ENCODE measurements at regions of chr17 and their contacts with region 1.

Region 1: DNA sequence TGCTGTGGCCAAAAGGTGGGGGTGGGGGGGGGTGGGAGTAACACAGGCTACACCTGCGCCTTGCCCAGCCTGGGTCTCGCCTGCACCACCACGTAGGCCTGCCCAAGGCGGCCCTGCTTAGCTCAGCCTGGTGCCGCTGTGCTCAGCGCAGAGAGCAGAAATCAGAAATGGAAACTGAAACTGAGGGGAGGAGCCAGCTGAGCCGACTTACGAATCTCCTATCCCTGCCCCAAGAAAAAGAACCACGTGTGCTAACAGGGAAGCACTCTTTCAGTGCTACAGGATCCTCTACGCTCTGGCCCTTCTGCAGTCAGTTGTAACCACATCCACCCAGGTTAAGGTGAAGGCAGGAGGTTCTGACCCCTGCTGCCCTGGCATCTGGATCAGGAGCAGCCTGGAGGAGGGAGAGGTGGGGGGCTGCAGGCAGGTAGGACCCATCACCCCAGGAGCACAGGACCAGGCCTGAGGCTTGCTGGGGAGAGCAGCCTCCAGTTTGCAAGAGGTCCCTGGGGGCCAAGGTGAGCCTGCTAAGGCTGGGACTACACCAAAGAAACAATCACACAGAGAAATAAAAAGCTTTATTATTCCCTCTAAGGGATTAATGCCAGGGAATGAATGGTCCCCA is at the start of gene DHX58:
- DNase-seq: peak; percentile 47 to 86 (median 81)
- ATAC-seq: peak; percentile 85
- H3K4me3 ChIP-seq: peak within 1 kb of the TSS; percentile 83
- H3K4me3 Mint-ChIP-seq: peak within 1 kb of the TSS; percentile 86 to 96 (median 94)
- H3K27ac ChIP-seq: peak within 1 kb of the TSS; percentile 83
- H3K27ac Mint-ChIP-seq: peak within 1 kb of the TSS; percentile 94 to 100 (median 97)
- H3K4me1 ChIP-seq: peaks cover 12 to 34% of the 10 kb centered on the region in 2 donors
- H3K4me1 Mint-ChIP-seq: peaks cover 22 to 60% (median 48%) of the 10 kb centered on the region in 7 donors
- H3K27me3 ChIP-seq: no peaks in the 10 kb centered on the region
- H3K27me3 Mint-ChIP-seq: no peaks in the 10 kb centered on the region
- total RNA-seq, gene DHX58: 36.0 to 80.5 (median 53.5) TPM

Region 2: DNA sequence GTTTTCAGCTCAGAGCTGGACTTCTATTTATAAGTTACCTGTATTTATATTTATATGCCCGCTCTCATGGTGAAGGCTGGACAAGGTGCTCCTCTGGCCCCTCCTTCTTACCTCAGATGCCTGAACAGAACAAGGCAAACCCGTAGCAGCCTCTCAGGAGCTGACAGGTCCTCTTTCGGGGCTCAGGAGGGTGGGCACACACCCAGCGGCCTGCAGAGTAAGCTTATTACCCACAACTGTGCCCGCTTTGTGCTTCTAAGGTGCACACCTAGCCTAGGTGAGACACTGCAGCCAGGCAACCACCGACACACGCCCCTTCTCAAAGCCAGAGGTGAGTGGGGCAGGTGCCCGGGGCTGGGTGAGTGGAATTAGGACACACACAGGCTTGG is 87.5 kb before region 1 on chr17:
- CTCF ChIA-PET with region 1: interaction called, 22 read pairs
- POLR2A ChIA-PET with region 1: interaction called, 25 read pairs
- intact Hi-C with region 1: loop called (anchors 1 kb)
- DNase-seq: no peak
- ATAC-seq: no peak
- H3K4me3 ChIP-seq: no peak overlapping the region
- H3K4me3 Mint-ChIP-seq: no peak overlapping the region
- H3K27ac ChIP-seq: no peak overlapping the region
- H3K27ac Mint-ChIP-seq: peak overlapping the region in 3 of 9 donors; percentile 18 to 75 (median 37)
- H3K4me1 ChIP-seq: peaks cover 9 to 11% of the 10 kb centered on the region in 2 donors
- H3K4me1 Mint-ChIP-seq: peaks cover 6 to 26% (median 24%) of the 10 kb centered on the region in 7 donors
- H3K27me3 ChIP-seq: no peaks in the 10 kb centered on the region
- H3K27me3 Mint-ChIP-seq: peaks cover 0 to 8% (median 0%) of the 10 kb centered on the region in 5 donors

Region 3: DNA sequence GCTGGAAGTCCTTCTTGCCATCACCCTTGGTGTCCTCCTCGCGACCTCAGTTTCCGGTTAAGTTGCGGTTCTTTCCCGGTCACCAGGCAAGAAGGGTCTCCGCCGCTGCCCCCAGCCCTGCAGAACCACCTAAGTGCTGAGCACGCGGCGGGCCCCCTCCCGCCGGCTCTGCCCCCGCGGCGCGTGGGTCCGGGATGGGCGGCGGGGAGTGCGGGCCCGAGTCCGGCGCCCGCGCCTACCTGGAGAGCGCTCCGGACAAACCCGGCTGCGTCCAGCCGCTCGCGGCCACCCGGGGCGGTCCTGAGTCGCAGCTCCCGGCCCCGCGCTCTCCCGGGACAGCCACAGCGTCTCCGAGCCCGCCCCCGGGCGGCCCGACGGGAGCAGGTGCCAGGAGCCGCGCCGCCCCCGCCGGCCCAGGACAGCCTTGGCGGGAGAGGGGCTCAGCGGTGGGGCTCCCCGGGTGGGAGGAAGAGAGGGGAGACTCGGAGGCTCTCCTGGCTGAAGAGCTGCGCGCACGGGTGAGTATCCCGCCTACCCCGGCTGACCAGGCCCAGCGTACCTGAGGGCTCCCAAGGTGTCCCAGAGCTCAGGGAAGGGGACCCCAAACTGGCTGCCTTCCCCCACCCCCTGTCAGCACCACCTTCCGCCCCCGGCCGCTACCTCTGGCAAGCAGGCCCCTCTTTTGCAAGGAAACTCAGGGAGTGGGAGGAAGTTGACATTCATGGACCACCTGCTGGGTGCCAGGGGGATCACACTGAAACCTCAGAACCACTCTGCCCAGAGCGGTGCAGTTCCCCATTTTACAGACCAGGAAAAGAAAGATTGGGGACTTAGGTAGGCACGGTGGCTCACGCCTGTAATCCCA is 40.1 kb before region 1 on chr17:
- CTCF ChIA-PET with region 1: interaction called, 19 read pairs
- POLR2A ChIA-PET with region 1: interaction called, 10 read pairs
- intact Hi-C with region 1: loop called (anchors 1 kb)
- DNase-seq: peak in 1 of 9 donors; percentile 3
- ATAC-seq: peak; percentile 24
- H3K4me3 ChIP-seq: peak overlapping the region; percentile 30
- H3K4me3 Mint-ChIP-seq: peak overlapping the region in 9 of 10 donors; percentile 36 to 78 (median 56)
- H3K27ac ChIP-seq: no peak overlapping the region
- H3K27ac Mint-ChIP-seq: no peak overlapping the region
- H3K4me1 ChIP-seq: peaks cover 7 to 9% of the 10 kb centered on the region in 2 donors
- H3K4me1 Mint-ChIP-seq: peaks cover 0 to 7% (median 5%) of the 10 kb centered on the region in 7 donors
- H3K27me3 ChIP-seq: peaks cover 0 to 7% of the 10 kb centered on the region in 2 donors
- H3K27me3 Mint-ChIP-seq: peaks cover 22 to 37% (median 31%) of the 10 kb centered on the region in 5 donors

Region 4: GRCh38 chr17:42101513-42102319 is 10.9 kb before region 1 on chr17:
- CTCF ChIA-PET with region 1: interaction called, 8 read pairs
- POLR2A ChIA-PET with region 1: interaction called, 11 read pairs
- intact Hi-C with region 1: no loop called
- DNase-seq: peak in 7 of 9 donors; percentile 34 to 77 (median 44)
- ATAC-seq: peak; percentile 72
- H3K4me3 ChIP-seq: no peak overlapping the region
- H3K4me3 Mint-ChIP-seq: no peak overlapping the region
- H3K27ac ChIP-seq: no peak overlapping the region
- H3K27ac Mint-ChIP-seq: no peak overlapping the region
- H3K4me1 ChIP-seq: peaks cover 6 to 8% of the 10 kb centered on the region in 2 donors
- H3K4me1 Mint-ChIP-seq: peaks cover 0 to 12% (median 10%) of the 10 kb centered on the region in 7 donors
- H3K27me3 ChIP-seq: no peaks in the 10 kb centered on the region
- H3K27me3 Mint-ChIP-seq: peaks cover 0 to 15% (median 9%) of the 10 kb centered on the region in 5 donors

Region 5: DNA sequence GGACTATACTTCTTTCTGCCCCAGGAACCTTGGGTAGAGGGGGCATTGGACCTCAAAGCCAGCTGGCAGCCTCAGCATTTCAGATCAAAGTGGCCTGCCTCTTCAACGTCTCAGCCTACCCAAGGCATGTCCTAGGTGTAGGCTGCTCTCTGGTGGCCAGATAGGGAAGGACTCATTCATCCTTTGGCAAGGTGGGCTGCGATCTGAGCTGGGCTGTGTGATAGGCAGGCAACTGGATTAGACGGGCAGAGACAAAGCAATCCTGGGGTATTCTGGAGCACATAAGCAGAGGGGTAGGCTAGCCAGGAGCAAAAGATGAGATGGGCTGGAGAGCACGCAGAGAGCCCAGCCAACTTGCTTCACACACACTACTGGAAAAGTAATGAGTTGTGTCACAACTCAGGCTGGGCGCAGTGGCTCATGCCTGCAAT is 414.6 kb after region 1 on chr17:
- CTCF ChIA-PET with region 1: no interaction called
- POLR2A ChIA-PET with region 1: no interaction called
- intact Hi-C with region 1: loop called in 1 of 2 experiments (anchors 5 kb)
- DNase-seq: peak in 8 of 9 donors; percentile 46 to 69 (median 62)
- ATAC-seq: peak; percentile 84
- H3K4me3 ChIP-seq: no peak overlapping the region
- H3K4me3 Mint-ChIP-seq: peak overlapping the region in 7 of 10 donors; percentile 6 to 73 (median 25)
- H3K27ac ChIP-seq: no peak overlapping the region
- H3K27ac Mint-ChIP-seq: peak overlapping the region in 8 of 9 donors; percentile 5 to 91 (median 68)
- H3K4me1 ChIP-seq: peaks cover 33 to 38% of the 10 kb centered on the region in 2 donors
- H3K4me1 Mint-ChIP-seq: peaks cover 23 to 44% (median 32%) of the 10 kb centered on the region in 7 donors
- H3K27me3 ChIP-seq: no peaks in the 10 kb centered on the region
- H3K27me3 Mint-ChIP-seq: peaks cover 0 to 4% (median 0%) of the 10 kb centered on the region in 5 donors

Measured in naive thymus-derived CD4-positive, alpha-beta T cell (primary cell).